A549 (cell line): ENCODE measurements at regions of chr1 and their contacts with region 1.

Region 1: GRCh38 chr1:109548321-109549267 is at the start of gene GNAI3:
- DNase-seq: peak; percentile 91 to 93
- ATAC-seq: peak; percentile 97 to 99
- H3K4me3 ChIP-seq: peak within 1 kb of the TSS; percentile 99
- H3K27ac ChIP-seq: peak within 1 kb of the TSS; percentile 95 to 96
- H3K4me1 ChIP-seq: peaks cover 21% of the 10 kb centered on the region
- CTCF ChIP-seq: no peak
- EP300 ChIP-seq: no peak
- POLR2A ChIP-seq: peak; percentile 83
- RAD21 ChIP-seq: no peak
- polyA plus RNA-seq, gene GNAI3: 6.1 and 8.7 TPM in 2 replicates

Region 2: GRCh38 chr1:109532365-109533136 is 16.0 kb before region 1 on chr1:
- CTCF ChIA-PET with region 1: interaction called, 143 read pairs
- POLR2A ChIA-PET with region 1: interaction called, 6 read pairs
- DNase-seq: peak; percentile 58 to 64
- ATAC-seq: peak; percentile 83 to 94
- H3K4me3 ChIP-seq: no peak overlapping the region
- H3K27ac ChIP-seq: peak overlapping the region; percentile 67 to 84
- H3K4me1 ChIP-seq: peaks cover 4% of the 10 kb centered on the region; the same call in 2 of the 3 replicates
- CTCF ChIP-seq: peak; percentile 55
- EP300 ChIP-seq: no peak
- POLR2A ChIP-seq: no peak
- RAD21 ChIP-seq: peak; percentile 71 to 81

Region 3: GRCh38 chr1:109620841-109621286 is 72.3 kb after region 1 on chr1:
- CTCF ChIA-PET with region 1: interaction called, 9 read pairs
- POLR2A ChIA-PET with region 1: interaction called, 27 read pairs
- DNase-seq: peak; percentile 87 to 92
- ATAC-seq: peak; percentile 82 to 88
- H3K4me3 ChIP-seq: peak overlapping the region; percentile 90
- H3K27ac ChIP-seq: peak overlapping the region; percentile 93 to 98
- H3K4me1 ChIP-seq: peaks cover 31% of the 10 kb centered on the region
- CTCF ChIP-seq: no peak
- EP300 ChIP-seq: no peak
- POLR2A ChIP-seq: no peak
- RAD21 ChIP-seq: no peak

Region 4: DNA sequence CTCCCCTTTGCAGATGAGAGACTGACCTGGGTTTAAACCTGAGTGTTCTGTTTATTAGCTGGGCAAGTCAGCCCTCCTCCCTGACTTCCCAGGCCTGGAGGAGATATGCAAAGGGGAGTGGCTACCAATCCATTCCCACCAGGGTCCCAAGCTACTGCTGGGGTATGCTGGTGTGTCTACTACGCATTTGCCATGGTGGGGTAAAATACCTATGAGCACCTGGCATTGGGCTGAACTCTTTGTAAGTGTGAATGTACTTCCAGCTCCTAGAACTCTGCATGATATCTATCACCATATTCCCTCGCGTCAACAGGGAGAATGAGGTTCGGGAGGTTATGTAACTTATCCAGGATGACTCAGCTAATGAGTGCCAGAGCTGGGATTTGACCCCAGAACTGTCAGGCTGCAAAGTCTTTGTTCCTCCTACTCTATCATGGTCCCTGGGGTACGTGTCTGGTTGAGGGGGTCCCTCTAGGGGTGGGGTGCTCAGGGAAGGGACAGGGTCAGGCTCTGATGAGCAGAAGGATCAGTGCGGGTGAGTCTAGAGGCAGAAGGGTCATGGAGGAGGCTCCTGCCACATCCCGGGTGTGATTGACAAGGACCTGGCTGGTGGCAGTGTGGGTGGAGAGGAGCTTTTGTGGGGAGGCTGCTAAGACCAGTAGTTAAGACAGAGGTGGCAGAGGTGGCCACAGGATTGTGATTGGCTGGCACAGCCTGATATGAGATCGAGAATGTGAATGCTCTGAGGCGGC is 87.8 kb after region 1 on chr1:
- CTCF ChIA-PET with region 1: interaction called, 73 read pairs
- POLR2A ChIA-PET with region 1: interaction called, 20 read pairs
- DNase-seq: peak in 1 of 2 experiments; percentile 34
- ATAC-seq: peak; percentile 35 to 59; a peak in 5 of 6 replicates
- H3K4me3 ChIP-seq: no peak overlapping the region
- H3K27ac ChIP-seq: peak overlapping the region; percentile 53 to 78
- H3K4me1 ChIP-seq: peaks cover 27% of the 10 kb centered on the region
- CTCF ChIP-seq: no peak
- EP300 ChIP-seq: no peak
- POLR2A ChIP-seq: no peak
- RAD21 ChIP-seq: no peak

Region 5: GRCh38 chr1:109649491-109649914 is 100.9 kb after region 1 on chr1:
- CTCF ChIA-PET with region 1: interaction called, 38 read pairs
- POLR2A ChIA-PET with region 1: interaction called, 10 read pairs
- DNase-seq: peak in 1 of 2 experiments; percentile 46
- ATAC-seq: peak in 1 of 2 experiments; percentile 67; a peak in 3 of 6 replicates
- H3K4me3 ChIP-seq: 0 out of 3 replicates have a peak overlapping the region, but pooled peaks have one; percentile 21
- H3K27ac ChIP-seq: peak overlapping the region; percentile 57 to 63; a peak in 5 of 6 replicates
- H3K4me1 ChIP-seq: peaks cover 17% of the 10 kb centered on the region; the same call in 2 of the 3 replicates
- CTCF ChIP-seq: peak; percentile 55
- EP300 ChIP-seq: no peak
- POLR2A ChIP-seq: no peak
- RAD21 ChIP-seq: peak; percentile 48 to 50

Region 6: GRCh38 chr1:110011527-110012041 is 463.0 kb after region 1 on chr1:
- CTCF ChIA-PET with region 1: interaction called, 3 read pairs
- POLR2A ChIA-PET with region 1: interaction called, 14 read pairs
- DNase-seq: peak; percentile 56 to 61
- ATAC-seq: peak; percentile 92 to 97
- H3K4me3 ChIP-seq: no peak overlapping the region
- H3K27ac ChIP-seq: 0 out of 6 replicates have a peak overlapping the region, but pooled peaks of 1 of the 2 experiments have one; percentile 3
- H3K4me1 ChIP-seq: peaks cover 17% of the 10 kb centered on the region
- CTCF ChIP-seq: peak; percentile 53
- EP300 ChIP-seq: no peak
- POLR2A ChIP-seq: no peak
- RAD21 ChIP-seq: peak; percentile 59 to 65